Left colon (tissue), 2 donors: ENCODE measurements at regions of chr17 and their contacts with region 1.

Region 1: DNA sequence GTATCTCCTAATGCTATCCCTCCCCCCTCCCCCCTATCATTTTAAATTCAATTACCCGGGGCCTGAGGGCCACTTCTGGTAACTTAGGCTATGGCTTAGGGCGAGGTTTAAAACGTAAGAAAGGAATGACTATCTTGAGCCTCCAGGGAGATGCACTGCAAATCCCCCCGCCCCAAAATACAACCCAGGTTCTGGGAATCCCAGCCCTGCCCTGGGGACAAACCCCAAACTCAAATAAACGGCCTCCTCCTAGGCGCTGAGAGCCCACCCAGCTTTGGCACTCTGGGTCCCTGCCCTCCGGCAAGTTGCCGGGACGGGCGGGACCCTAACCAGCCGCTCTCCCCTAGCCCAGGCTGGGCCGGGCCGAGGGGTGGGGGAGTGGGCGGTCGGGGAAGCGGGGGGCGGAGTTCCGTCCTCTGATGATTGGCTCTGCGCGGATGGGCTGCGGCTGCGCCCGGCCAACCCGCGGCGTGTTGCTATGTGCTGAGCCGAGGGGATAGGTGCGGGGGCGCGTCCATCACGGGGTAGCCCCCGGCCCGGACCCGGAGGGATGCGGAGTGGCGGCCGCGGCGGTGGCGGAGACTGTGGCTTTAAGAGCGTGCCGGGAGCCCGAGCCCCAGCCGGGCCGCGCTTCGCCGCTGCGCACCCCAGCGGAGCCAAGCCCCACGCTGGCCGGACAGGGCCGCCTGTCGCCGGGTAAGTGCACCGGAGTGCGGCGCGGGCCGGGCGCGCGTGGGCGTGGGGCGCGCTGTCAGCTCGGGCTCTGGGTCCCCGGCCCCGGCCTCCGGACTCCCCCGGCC is at the start of gene YPEL2:
- DNase-seq: peak; percentile 96 to 97
- ATAC-seq: peak; percentile 82
- total RNA-seq, gene YPEL2: 25.8 to 27.2 TPM

Region 2: GRCh38 chr17:59366773-59367657 is 35.7 kb after region 1 on chr17:
- intact Hi-C with region 1: loop called in 1 of 2 experiments (anchors 5 kb)
- DNase-seq: peak; percentile 72 to 86
- ATAC-seq: peak; percentile 87

Region 3: GRCh38 chr17:59427425-59427921 is 96.1 kb after region 1 on chr17:
- intact Hi-C with region 1: loop called in 1 of 2 experiments (anchors 5 kb)
- DNase-seq: no peak
- ATAC-seq: no peak

Region 4: DNA sequence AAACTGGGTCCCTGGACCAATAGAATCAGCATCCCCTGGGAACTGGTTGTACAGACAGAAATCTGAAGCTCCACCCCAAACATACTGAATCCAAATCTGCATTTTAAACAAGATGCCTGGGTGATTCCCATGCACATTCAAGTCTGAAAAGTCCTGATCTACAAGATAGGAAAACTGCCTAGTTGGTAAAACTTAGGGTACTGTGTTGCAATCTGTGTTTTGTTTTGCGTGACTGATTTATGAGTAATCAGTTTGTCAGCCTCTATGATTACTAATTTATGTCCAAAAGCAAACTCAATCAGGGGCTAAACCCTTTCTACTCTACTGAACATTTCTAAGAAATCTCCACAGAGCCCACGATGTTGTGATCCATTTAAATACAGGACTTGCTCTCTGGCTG is 103.9 kb after region 1 on chr17:
- intact Hi-C with region 1: loop called (anchors 5 kb)
- DNase-seq: no peak
- ATAC-seq: no peak

Region 5: DNA sequence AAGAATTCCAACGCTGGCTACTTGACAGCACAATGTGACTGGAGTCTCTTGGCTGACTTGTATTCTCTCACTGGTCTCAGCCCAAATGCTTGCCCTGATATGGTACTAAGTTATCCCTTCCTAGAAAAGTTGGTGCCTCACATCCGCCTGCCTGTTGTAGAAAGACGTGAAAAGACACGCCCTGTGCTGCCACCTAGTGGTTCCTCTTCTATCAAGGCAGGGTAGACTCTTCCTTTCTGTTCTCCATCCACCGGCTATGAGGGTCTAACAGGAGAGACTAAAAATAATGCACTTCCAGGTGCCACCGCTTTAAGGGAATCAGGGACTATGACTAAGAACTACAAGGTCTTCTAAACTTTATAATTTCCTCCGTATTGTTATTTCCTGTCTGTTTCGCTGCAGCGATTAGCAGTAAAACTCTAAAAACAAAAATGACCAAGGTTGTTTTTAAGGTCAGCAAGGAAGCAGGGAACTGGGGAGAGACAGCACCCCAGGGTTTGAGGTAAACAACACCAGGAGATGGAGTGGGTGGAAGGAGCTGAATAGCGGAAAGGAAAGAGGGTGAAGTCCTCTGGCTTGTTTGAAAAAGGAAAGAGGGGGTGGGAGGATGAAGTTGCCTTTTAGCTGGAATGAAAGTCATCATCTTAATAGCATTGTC is 109.6 kb after region 1 on chr17:
- intact Hi-C with region 1: loop called (anchors 5 kb)
- DNase-seq: peak; percentile 87 to 96
- ATAC-seq: peak; percentile 97